ENCODE measurements at regions of chr19 and their contacts with region 1.

Region 1: DNA sequence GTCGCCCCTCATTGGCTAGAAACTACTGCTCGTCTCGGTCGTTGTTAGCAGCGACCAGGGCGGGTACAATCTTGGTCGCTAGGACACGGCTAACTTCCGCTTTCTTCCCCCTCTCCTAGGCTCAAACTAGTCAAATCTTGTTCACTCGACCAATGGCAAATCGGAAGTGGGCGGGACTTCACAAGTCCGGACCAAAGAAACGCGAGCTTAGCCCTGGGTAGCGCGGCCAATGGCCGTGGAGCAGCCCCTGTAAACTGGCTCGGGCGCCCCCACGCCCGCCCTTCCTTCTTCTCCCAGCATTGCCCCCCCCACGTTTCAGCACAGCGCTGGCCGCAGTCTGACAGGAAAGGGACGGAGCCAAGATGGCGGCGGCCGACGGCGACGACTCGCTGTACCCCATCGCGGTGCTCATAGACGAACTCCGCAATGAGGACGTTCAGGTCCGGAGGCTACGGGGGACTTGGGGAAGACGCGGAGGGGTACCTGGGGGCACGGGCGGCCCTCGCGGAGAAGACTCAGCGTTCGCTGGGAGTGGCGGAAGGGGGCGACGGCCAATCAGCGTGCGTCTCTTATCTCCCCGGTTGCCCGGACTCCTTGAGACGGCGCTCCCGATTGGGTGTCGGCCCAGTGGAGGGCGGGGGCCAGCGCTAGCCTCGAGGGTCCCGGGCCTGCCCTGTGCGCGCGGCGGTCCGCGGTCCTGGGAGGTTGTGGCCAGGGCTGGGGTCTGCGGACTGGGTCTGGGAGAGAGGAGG is at the start of gene PPP2R1A:
- DNase-seq: peak; percentile 98
- H3K4me3 Mint-ChIP-seq: peak within 1 kb of the TSS; percentile 97
- H3K27ac Mint-ChIP-seq: peak within 1 kb of the TSS; percentile 98
- H3K4me1 Mint-ChIP-seq: peaks cover 38% of the 10 kb centered on the region
- H3K27me3 Mint-ChIP-seq: no peaks in the 10 kb centered on the region
- total RNA-seq, gene PPP2R1A: 203 to 209 TPM

Region 2: GRCh38 chr19:51915324-51915867 is 274.5 kb before region 1 on chr19:
- CTCF ChIA-PET with region 1: no interaction called
- POLR2A ChIA-PET with region 1: no interaction called
- DNase-seq: no peak
- H3K4me3 Mint-ChIP-seq: no peak overlapping the region
- H3K27ac Mint-ChIP-seq: no peak overlapping the region
- H3K4me1 Mint-ChIP-seq: no peaks in the 10 kb centered on the region
- H3K27me3 Mint-ChIP-seq: no peaks in the 10 kb centered on the region

Region 3: DNA sequence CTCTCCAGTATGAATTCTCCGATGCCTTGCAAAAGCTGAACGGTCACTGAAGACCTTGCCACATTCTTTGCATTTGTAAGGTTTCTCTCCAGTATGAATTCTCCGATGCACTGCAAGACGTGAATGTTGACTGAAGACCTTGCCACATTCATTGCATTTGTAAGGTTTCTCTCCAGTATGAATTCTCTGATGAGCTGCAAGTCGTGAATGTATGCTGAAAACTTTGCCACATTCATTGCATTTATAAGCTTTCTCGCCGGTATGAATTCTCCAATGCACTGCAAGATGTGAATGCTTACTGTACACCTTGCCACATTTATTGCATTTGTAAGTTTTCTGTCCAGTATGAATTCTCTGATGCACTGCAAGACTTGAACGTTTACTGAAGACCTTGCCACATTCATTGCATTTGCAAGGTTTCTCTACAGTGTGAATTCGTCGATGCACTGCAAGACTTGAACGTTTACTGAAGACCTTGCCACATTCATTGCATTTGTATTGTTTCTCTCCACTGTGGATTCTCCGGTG is 74.3 kb before region 1 on chr19:
- CTCF ChIA-PET with region 1: no interaction called
- POLR2A ChIA-PET with region 1: no interaction called
- DNase-seq: no peak
- H3K4me3 Mint-ChIP-seq: no peak overlapping the region
- H3K27ac Mint-ChIP-seq: no peak overlapping the region
- H3K4me1 Mint-ChIP-seq: no peaks in the 10 kb centered on the region
- H3K27me3 Mint-ChIP-seq: no peaks in the 10 kb centered on the region

Region 4: GRCh38 chr19:52171321-52172169 is 18.4 kb before region 1 on chr19 and contains the start of gene ZNF836:
- CTCF ChIA-PET with region 1: interaction called, 6 read pairs
- POLR2A ChIA-PET with region 1: interaction called, 43 read pairs
- DNase-seq: peak; percentile 92
- H3K4me3 Mint-ChIP-seq: peak within 1 kb of the TSS; percentile 87
- H3K27ac Mint-ChIP-seq: peak within 1 kb of the TSS; percentile 77
- H3K4me1 Mint-ChIP-seq: peaks cover 28% of the 10 kb centered on the region
- H3K27me3 Mint-ChIP-seq: no peaks in the 10 kb centered on the region
- total RNA-seq, gene ZNF836: 17.3 to 18.0 TPM